H1 (cell line): ENCODE measurements at regions of chr19 and their contacts with region 1.

Region 1: DNA sequence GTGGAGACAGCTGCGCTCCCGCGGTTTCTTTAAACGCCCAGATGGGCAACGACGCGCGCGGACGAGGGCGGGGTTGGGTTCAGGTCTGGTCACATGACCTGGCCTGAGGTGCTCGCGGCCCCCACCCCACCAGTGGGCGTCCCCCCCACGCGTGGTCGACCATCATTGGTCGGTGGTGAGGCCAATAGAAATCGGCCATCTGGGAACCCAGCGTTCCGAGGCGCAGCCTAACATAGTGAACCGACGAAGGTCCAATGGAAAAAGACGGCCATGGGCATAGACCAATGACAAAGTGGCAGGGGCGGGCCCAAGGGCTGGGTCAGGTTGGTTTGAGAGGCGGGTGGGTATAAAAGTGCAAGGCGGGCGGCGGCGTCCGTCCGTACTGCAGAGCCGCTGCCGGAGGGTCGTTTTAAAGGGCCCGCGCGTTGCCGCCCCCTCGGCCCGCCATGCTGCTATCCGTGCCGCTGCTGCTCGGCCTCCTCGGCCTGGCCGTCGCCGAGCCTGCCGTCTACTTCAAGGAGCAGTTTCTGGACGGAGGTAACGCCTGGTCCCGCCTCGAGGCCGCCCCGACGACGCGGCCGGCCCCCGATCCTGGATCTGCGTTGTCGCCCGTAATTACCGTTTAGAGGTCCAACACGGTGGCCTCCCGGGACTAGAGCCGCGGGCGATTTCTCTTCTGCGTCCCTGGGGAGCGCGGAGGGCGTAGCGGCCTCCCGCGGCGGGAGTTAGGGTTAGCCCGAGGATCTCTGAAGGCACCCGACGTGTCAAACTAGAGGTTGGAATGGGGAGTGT is at the start of gene CALR:
- DNase-seq: peak; percentile 91 to 98
- H3K4me3 ChIP-seq: peak within 1 kb of the TSS; percentile 68 to 97 (median 93)
- H3K27ac ChIP-seq: peak within 1 kb of the TSS; percentile 32; the same call in 1 of the 2 replicates
- H3K4me1 ChIP-seq: peaks cover 0 to 23% (median 13%) of the 10 kb centered on the region in 4 experiments; a peak in 6 of 7 replicates
- H3K27me3 ChIP-seq: no peaks in the 10 kb centered on the region
- CTCF ChIP-seq: no peak
- EP300 ChIP-seq: no peak
- POLR2A ChIP-seq: peak; percentile 98 to 99
- RAD21 ChIP-seq: no peak
- total RNA-seq, gene CALR: 1,155 and 1,177 TPM in 2 replicates

Region 2: GRCh38 chr19:12913011-12913561 is 25.3 kb before region 1 on chr19:
- CTCF ChIA-PET with region 1: interaction called, 3 read pairs
- POLR2A ChIA-PET with region 1: interaction called, 23 read pairs
- DNase-seq: peak in 1 of 2 experiments; percentile 70
- H3K4me3 ChIP-seq: peak overlapping the region in 2 of 4 experiments; percentile 32 to 33; a peak in 3 of 8 replicates
- H3K27ac ChIP-seq: peak overlapping the region; percentile 42; the same call in 1 of the 2 replicates
- H3K4me1 ChIP-seq: peaks cover 8 to 20% (median 14%) of the 10 kb centered on the region in 4 experiments
- H3K27me3 ChIP-seq: peaks cover 1 to 3% (median 2%) of the 10 kb centered on the region in 4 experiments
- CTCF ChIP-seq: no peak
- EP300 ChIP-seq: no peak
- POLR2A ChIP-seq: no peak; a peak in 1 of 3 replicates
- RAD21 ChIP-seq: no peak

Region 3: GRCh38 chr19:12918271-12918670 is 20.2 kb before region 1 on chr19:
- CTCF ChIA-PET with region 1: interaction called, 4 read pairs
- POLR2A ChIA-PET with region 1: interaction called, 58 read pairs
- DNase-seq: no peak
- H3K4me3 ChIP-seq: no peak overlapping the region
- H3K27ac ChIP-seq: no peak overlapping the region
- H3K4me1 ChIP-seq: peaks cover 5 to 9% (median 7%) of the 10 kb centered on the region in 4 experiments; a peak in 6 of 7 replicates
- H3K27me3 ChIP-seq: peaks cover 6 to 12% (median 11%) of the 10 kb centered on the region in 4 experiments
- CTCF ChIP-seq: no peak
- EP300 ChIP-seq: no peak
- POLR2A ChIP-seq: no peak
- RAD21 ChIP-seq: no peak

Region 4: DNA sequence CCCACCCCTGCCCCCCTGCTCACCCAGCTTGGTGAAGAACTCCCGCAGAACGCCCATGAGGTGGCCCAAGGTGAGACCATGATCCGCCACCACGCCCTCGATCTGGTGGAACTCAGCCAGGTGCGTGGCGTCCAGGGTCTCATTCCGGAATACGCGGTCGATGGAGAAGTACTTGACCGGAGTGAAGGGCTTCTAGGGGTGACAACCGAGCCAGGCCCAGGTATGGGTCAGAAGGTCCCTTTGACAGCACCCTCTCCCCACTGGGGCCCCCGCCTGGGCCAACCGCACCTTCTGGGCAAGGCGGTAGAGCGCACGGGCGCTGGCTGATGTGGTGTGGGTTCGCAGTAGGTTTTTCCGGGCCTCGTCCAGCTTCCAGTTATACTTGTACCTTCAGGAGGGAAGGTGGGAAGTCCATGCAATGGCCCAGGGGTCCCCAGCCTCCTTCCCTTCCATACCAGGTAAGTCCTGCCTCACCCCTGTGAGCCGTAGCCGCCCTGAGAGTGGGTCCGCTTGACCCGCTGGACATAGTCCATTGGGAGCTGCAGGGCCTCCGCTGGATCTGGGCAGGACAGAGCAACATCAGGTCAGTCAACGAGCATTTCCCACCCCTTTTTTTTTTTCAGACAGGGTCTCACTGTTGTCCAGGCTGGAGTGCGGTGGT is 13.7 kb before region 1 on chr19:
- CTCF ChIA-PET with region 1: interaction called, 4 read pairs
- POLR2A ChIA-PET with region 1: interaction called, 58 read pairs
- DNase-seq: no peak
- H3K4me3 ChIP-seq: no peak overlapping the region
- H3K27ac ChIP-seq: no peak overlapping the region
- H3K4me1 ChIP-seq: no peaks in the 10 kb centered on the region
- H3K27me3 ChIP-seq: no peaks in the 10 kb centered on the region
- CTCF ChIP-seq: no peak
- EP300 ChIP-seq: no peak
- POLR2A ChIP-seq: no peak
- RAD21 ChIP-seq: no peak

Region 5: GRCh38 chr19:12956446-12957388 is 18.3 kb after region 1 on chr19 and contains the start of gene GADD45GIP1:
- CTCF ChIA-PET with region 1: no interaction called
- POLR2A ChIA-PET with region 1: interaction called, 71 read pairs
- DNase-seq: peak; percentile 38 to 89
- H3K4me3 ChIP-seq: peak within 1 kb of the TSS; percentile 82 to 91 (median 88)
- H3K27ac ChIP-seq: peak within 1 kb of the TSS; percentile 94
- H3K4me1 ChIP-seq: peaks cover 0 to 4% (median 2%) of the 10 kb centered on the region in 4 experiments; a peak in 3 of 7 replicates
- H3K27me3 ChIP-seq: no peaks in the 10 kb centered on the region
- CTCF ChIP-seq: no peak
- EP300 ChIP-seq: no peak
- POLR2A ChIP-seq: peak; percentile 96 to 97
- RAD21 ChIP-seq: no peak
- total RNA-seq, gene GADD45GIP1: 42.2 and 45.5 TPM in 2 replicates

Region 6: GRCh38 chr19:12974301-12975220 is 36.1 kb after region 1 on chr19:
- CTCF ChIA-PET with region 1: no interaction called
- POLR2A ChIA-PET with region 1: no interaction called
- DNase-seq: no peak
- H3K4me3 ChIP-seq: no peak overlapping the region
- H3K27ac ChIP-seq: no peak overlapping the region
- H3K4me1 ChIP-seq: peaks cover 0 to 2% (median 0%) of the 10 kb centered on the region in 4 experiments; a peak in 2 of 7 replicates
- H3K27me3 ChIP-seq: no peaks in the 10 kb centered on the region
- CTCF ChIP-seq: no peak
- EP300 ChIP-seq: no peak
- POLR2A ChIP-seq: no peak
- RAD21 ChIP-seq: no peak